ENCODE measurements at regions of chr6 and their contacts with region 1.

Region 1: GRCh38 chr6:70369332-70369950 is 43.9 kb upstream of the FAM135A start:
- DNase-seq: peak; percentile 47 to 84
- H3K4me3 ChIP-seq: no peak overlapping the region
- H3K27ac ChIP-seq: no peak overlapping the region
- H3K4me1 ChIP-seq: no peaks in the 10 kb centered on the region
- H3K27me3 ChIP-seq: no peaks in the 10 kb centered on the region
- CTCF ChIP-seq: peak; percentile 77 to 96 (median 91)
- EP300 ChIP-seq: no peak
- POLR2A ChIP-seq: no peak
- RAD21 ChIP-seq: peak; percentile 88 to 89

Region 2: GRCh38 chr6:70231311-70231710 is 138.1 kb before region 1 on chr6:
- CTCF ChIA-PET with region 1: interaction called, 22 read pairs
- POLR2A ChIA-PET with region 1: no interaction called
- DNase-seq: no peak
- H3K4me3 ChIP-seq: no peak overlapping the region
- H3K27ac ChIP-seq: no peak overlapping the region
- H3K4me1 ChIP-seq: peaks cover 0 to 3% (median 2%) of the 10 kb centered on the region in 4 experiments; a peak in 2 of 7 replicates
- H3K27me3 ChIP-seq: no peaks in the 10 kb centered on the region
- CTCF ChIP-seq: no peak
- EP300 ChIP-seq: no peak
- POLR2A ChIP-seq: no peak
- RAD21 ChIP-seq: no peak

Region 3: DNA sequence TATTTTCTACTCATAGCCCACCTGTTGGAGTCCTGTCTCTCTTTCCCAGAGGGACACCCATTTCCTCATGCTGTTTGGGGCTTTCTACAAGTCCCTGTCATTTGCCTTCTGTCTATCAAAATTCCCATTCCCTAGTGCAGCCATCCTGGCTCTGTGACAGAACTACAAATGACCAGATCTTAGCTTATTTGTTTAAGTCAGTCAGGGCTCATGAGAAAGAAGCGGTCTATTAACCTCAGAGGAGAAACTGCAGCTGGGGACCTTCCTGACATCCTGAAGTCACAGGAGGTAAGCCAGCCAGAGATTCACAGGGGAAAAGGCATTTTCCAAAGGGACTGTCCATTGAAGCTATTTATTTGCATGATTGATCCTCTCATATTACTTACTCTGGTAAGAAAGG is 64.8 kb before region 1 on chr6:
- CTCF ChIA-PET with region 1: interaction called, 228 read pairs
- POLR2A ChIA-PET with region 1: no interaction called
- DNase-seq: no peak
- H3K4me3 ChIP-seq: no peak overlapping the region
- H3K27ac ChIP-seq: no peak overlapping the region
- H3K4me1 ChIP-seq: peaks cover 0 to 4% (median 2%) of the 10 kb centered on the region in 4 experiments; a peak in 1 of 7 replicates
- H3K27me3 ChIP-seq: no peaks in the 10 kb centered on the region
- CTCF ChIP-seq: no peak
- EP300 ChIP-seq: no peak
- POLR2A ChIP-seq: no peak
- RAD21 ChIP-seq: no peak

Region 4: DNA sequence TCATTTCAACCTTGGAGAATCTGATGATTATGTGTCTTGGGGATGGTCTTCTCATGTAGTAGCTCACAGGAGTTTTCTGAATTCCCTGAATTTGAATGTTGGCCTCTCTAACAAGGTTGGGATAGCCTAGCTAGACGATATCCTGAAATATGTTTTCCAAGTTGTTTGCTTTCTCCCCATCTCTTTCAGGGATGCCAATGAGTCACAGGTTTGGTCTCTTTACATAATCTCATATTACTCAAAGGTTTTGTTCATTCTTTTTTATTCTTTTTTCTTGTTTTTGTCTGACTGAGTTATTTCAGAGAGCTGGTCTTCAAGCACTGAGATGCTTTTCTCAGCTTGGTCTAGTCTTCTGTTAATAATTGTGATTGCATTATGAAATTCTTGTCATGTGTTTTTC is 23.8 kb before region 1 on chr6:
- CTCF ChIA-PET with region 1: interaction called, 10 read pairs
- POLR2A ChIA-PET with region 1: no interaction called
- DNase-seq: no peak
- H3K4me3 ChIP-seq: no peak overlapping the region
- H3K27ac ChIP-seq: no peak overlapping the region
- H3K4me1 ChIP-seq: no peaks in the 10 kb centered on the region
- H3K27me3 ChIP-seq: no peaks in the 10 kb centered on the region
- CTCF ChIP-seq: no peak
- EP300 ChIP-seq: no peak
- POLR2A ChIP-seq: no peak
- RAD21 ChIP-seq: no peak

Region 5: DNA sequence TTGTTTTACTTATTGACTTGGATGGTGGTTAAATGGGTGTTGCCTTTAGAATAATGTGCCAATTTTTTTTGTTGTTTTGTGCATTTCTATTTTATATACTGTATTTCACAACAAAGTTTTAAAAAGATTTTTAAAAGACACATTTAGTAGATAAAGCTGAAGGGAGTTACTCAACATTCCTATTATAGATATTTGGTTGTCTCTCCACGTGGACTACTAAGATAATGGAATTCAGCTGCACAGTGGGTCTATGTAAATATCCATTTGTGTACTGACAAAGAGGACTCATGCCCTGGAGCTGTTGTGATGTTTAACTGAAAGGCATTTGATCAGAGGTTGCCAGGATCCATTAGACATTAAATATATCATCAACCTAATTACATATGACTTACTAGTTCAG is 20.6 kb after region 1 on chr6:
- CTCF ChIA-PET with region 1: interaction called, 24 read pairs
- POLR2A ChIA-PET with region 1: no interaction called
- DNase-seq: no peak
- H3K4me3 ChIP-seq: no peak overlapping the region
- H3K27ac ChIP-seq: no peak overlapping the region
- H3K4me1 ChIP-seq: no peaks in the 10 kb centered on the region
- H3K27me3 ChIP-seq: no peaks in the 10 kb centered on the region
- CTCF ChIP-seq: no peak
- EP300 ChIP-seq: no peak
- POLR2A ChIP-seq: no peak
- RAD21 ChIP-seq: no peak

Region 6: DNA sequence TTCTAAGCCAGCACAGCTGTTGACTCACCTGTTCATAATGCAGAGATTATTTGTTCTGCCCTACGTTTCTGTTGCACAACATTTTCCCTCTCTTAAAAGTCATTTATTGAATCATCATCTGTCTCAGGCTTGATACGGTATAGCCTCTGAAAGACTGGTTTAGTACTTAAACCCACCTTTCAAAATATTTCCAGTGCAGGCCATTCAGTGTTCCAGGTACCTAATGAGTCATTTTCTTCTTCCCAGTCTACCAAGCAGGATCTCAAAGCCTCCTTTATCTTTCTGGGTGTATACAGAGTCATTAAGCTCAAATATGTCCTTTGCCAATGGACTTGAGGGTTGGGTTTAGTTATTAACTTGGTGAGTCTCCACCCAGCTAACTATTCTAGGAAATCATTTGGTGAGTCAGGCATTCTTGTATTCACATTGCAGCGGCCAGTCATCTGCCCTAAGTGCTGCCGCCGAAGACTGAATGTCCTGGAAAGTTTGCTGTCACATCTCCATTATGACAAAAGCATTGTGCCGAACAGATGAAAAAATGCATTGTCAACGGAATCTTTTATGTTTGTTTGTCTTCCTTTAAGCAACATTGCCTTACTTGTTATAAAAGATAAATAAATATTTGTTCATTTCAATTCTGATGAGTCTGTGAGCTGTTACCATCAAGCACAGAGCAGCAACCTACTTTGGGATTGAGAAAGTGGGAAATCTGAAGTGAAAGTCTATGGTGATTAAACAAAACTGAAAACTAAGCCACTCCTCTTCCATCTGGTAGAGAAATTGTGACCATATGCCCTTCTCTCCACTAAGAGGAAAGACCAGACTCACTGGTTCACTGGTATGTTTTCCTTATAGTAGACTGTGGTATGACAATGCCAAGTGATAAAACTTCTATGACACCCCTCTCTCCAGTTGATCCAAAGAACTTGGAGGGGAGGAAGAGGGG is 29.6 kb after region 1 on chr6:
- CTCF ChIA-PET with region 1: interaction called, 12 read pairs
- POLR2A ChIA-PET with region 1: no interaction called
- DNase-seq: no peak
- H3K4me3 ChIP-seq: no peak overlapping the region
- H3K27ac ChIP-seq: no peak overlapping the region
- H3K4me1 ChIP-seq: peaks cover 0 to 3% (median 0%) of the 10 kb centered on the region in 4 experiments; a peak in 2 of 7 replicates
- H3K27me3 ChIP-seq: no peaks in the 10 kb centered on the region
- CTCF ChIP-seq: no peak
- EP300 ChIP-seq: no peak
- POLR2A ChIP-seq: no peak
- RAD21 ChIP-seq: no peak

Region 7: GRCh38 chr6:70520575-70520974 is 151.1 kb after region 1 on chr6:
- CTCF ChIA-PET with region 1: no interaction called
- POLR2A ChIA-PET with region 1: no interaction called
- DNase-seq: no peak
- H3K4me3 ChIP-seq: no peak overlapping the region
- H3K27ac ChIP-seq: no peak overlapping the region
- H3K4me1 ChIP-seq: no peaks in the 10 kb centered on the region
- H3K27me3 ChIP-seq: no peaks in the 10 kb centered on the region
- CTCF ChIP-seq: peak in 2 of 3 experiments; percentile 17 to 23; a peak in 2 of 4 replicates
- EP300 ChIP-seq: no peak
- POLR2A ChIP-seq: no peak
- RAD21 ChIP-seq: peak; percentile 64 to 66

Measured in H1 (cell line).